ENCODE measurements at regions of chr12 and their contacts with region 1.

Region 1: DNA sequence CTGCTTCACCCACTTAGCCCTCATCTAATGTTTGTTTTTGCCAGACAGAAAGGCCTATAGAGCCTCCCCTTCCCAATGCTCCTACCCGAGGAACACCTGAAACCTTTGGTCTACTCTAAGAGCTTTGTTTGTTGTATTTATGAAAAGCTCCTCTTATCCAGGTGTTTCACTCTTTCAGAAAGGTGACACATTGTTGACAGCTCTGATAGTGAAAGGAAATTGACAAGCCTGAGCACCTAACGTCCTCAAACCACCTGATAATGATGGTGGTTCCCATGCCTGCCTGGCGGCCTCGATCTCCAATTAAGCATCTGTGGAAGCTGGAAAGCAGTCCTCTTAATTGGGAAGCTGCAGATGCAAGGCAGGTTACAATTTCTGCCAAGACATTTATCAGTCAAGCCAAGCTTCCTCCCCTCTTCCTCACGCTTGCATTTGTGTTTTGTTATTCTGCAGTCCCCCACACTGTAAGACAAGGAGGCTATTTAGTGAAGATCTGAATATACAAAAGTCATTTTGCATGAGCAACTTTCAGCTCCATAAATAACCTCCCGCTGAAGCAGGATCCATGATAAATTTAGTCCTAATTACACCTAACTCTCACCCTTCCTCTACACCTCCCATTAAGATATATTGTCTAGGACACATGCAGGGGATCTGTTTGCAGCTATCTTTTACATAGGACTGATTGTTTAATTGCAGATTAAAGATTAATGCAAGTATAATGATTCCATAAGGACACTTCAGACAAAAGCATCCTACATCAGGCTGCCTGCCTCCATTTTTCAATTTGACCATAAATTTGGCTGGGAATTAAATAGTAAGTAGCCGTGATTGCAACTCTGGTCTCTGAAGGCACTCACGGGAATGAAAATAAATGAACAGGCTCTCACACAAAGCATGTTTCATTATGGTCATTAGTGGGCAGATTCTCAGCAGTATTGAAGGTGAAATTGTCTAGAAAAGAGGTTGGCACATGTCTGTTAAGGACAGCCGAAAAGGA is 288.7 kb downstream of the PDZRN4 start:
- DNase-seq: no peak
- ATAC-seq: no peak
- H3K4me3 ChIP-seq: no peak overlapping the region
- H3K27ac ChIP-seq: no peak overlapping the region
- H3K4me1 ChIP-seq: no peaks in the 10 kb centered on the region
- H3K27me3 ChIP-seq: no peaks in the 10 kb centered on the region
- CTCF ChIP-seq: no peak
- POLR2A ChIP-seq: no peak
- RAD21 ChIP-seq: no peak

Region 2: DNA sequence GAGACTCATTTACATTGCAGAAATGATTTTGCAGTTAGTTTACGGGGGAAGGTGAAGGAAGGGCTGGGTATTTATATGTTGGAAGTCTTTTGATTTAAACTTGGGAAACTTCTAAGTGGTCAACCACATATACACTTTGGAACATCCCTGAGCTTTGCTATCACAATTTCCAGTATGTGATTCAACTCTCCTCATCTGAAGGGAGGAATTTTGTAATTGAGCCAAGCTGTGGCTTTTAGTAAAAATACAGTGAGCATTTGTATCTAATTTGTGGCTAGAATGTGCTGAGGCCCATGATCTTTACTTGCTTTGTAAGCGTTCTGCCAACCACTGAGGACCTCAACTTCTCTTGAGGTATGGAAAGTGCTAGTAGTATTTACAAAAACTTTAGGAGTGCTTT is 523.7 kb before region 1 on chr12:
- CTCF ChIA-PET with region 1: no interaction called
- POLR2A ChIA-PET with region 1: no interaction called
- RAD21 ChIA-PET with region 1: no interaction called
- intact Hi-C with region 1: loop called (anchors 10 kb)
- DNase-seq: no peak
- ATAC-seq: no peak
- H3K4me3 ChIP-seq: no peak overlapping the region
- H3K27ac ChIP-seq: no peak overlapping the region
- H3K4me1 ChIP-seq: no peaks in the 10 kb centered on the region
- H3K27me3 ChIP-seq: no peaks in the 10 kb centered on the region
- CTCF ChIP-seq: no peak
- POLR2A ChIP-seq: no peak
- RAD21 ChIP-seq: no peak

Region 3: GRCh38 chr12:41250748-41251147 is 226.1 kb before region 1 on chr12:
- CTCF ChIA-PET with region 1: no interaction called
- POLR2A ChIA-PET with region 1: no interaction called
- RAD21 ChIA-PET with region 1: no interaction called
- intact Hi-C with region 1: no loop called
- DNase-seq: no peak
- ATAC-seq: no peak
- H3K4me3 ChIP-seq: no peak overlapping the region
- H3K27ac ChIP-seq: no peak overlapping the region
- H3K4me1 ChIP-seq: no peaks in the 10 kb centered on the region
- H3K27me3 ChIP-seq: no peaks in the 10 kb centered on the region
- CTCF ChIP-seq: no peak
- POLR2A ChIP-seq: no peak
- RAD21 ChIP-seq: no peak

Region 4: GRCh38 chr12:41545747-41546146 is 68.9 kb after region 1 on chr12:
- CTCF ChIA-PET with region 1: no interaction called
- POLR2A ChIA-PET with region 1: no interaction called
- RAD21 ChIA-PET with region 1: no interaction called
- intact Hi-C with region 1: no loop called
- DNase-seq: no peak
- ATAC-seq: no peak
- H3K4me3 ChIP-seq: no peak overlapping the region
- H3K27ac ChIP-seq: no peak overlapping the region
- H3K4me1 ChIP-seq: no peaks in the 10 kb centered on the region
- H3K27me3 ChIP-seq: no peaks in the 10 kb centered on the region
- CTCF ChIP-seq: no peak
- POLR2A ChIP-seq: no peak
- RAD21 ChIP-seq: no peak